Colonic mucosa (tissue), 4 donors: ENCODE measurements at regions of chr7 and their contacts with region 1.

Region 1: GRCh38 chr7:39745320-39745719 is 121.9 kb downstream of the RALA start:
- DNase-seq: no peak
- H3K4me3 ChIP-seq: no peak overlapping the region
- H3K27ac ChIP-seq: no peak overlapping the region
- H3K4me1 ChIP-seq: no peaks in the 10 kb centered on the region
- H3K27me3 ChIP-seq: no peaks in the 10 kb centered on the region
- CTCF ChIP-seq: no peak

Region 2: DNA sequence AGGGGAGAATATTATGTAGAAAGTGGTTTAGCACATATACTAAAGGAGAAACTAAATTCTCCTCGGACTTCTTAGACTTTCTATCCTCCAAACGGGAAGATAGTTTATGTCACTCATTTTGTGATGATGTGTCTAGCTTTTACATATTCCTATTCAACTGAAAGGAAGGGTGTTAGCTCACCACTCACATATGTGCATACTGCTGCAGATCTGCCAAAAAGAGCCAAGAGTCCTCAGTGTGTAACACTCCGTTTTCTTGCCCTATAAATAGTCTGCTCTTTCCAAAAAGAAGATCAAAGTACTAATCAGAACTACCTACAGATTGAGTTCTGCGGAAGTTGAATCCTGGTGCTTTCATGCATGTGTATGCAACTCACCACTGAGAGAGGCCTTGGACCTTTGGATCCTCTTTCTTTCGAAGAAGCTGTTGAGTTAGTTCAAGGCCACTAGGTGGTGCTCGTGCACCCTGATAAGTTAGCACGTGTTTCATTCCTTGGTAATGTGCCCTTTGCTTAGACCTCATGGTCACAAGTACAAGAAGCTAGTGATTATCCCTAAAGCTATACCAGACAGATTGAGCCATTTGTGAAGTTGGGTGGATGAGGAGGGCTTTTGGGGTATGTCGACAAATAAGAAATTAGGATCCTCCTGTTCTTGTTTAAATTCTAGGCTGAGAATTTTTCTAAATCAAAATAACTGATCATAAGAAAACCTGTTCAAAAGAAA is 165.0 kb before region 1 on chr7:
- intact Hi-C with region 1: loop called (anchors 2 kb)
- DNase-seq: peak; percentile 81
- H3K4me3 ChIP-seq: no peak overlapping the region
- H3K27ac ChIP-seq: no peak overlapping the region
- H3K4me1 ChIP-seq: no peaks in the 10 kb centered on the region
- H3K27me3 ChIP-seq: no peaks in the 10 kb centered on the region
- CTCF ChIP-seq: peak; percentile 92